AG04449 (cell line): ENCODE measurements at regions of chr11 and their contacts with region 1.

Region 1: GRCh38 chr11:124644426-124645280 is 22.0 kb downstream of the TBRG1 start:
- DNase-seq: peak; percentile 28
- H3K4me3 ChIP-seq: peak overlapping the region; percentile 36
- CTCF ChIP-seq: peak; percentile 68

Region 2: GRCh38 chr11:124633355-124633754 is 11.3 kb before region 1 on chr11:
- CTCF ChIA-PET with region 1: interaction called, 39 read pairs
- POLR2A ChIA-PET with region 1: no interaction called
- DNase-seq: no peak
- H3K4me3 ChIP-seq: no peak overlapping the region
- CTCF ChIP-seq: peak; percentile 8

Region 3: GRCh38 chr11:124673333-124674167 is 28.9 kb after region 1 on chr11 and contains the starts of genes SIAE and SPA17:
- CTCF ChIA-PET with region 1: interaction called, 28 read pairs
- POLR2A ChIA-PET with region 1: interaction called, 3 read pairs
- DNase-seq: peak; percentile 67
- H3K4me3 ChIP-seq: peak within 1 kb of the TSS; percentile 79
- CTCF ChIP-seq: no peak

Region 4: DNA sequence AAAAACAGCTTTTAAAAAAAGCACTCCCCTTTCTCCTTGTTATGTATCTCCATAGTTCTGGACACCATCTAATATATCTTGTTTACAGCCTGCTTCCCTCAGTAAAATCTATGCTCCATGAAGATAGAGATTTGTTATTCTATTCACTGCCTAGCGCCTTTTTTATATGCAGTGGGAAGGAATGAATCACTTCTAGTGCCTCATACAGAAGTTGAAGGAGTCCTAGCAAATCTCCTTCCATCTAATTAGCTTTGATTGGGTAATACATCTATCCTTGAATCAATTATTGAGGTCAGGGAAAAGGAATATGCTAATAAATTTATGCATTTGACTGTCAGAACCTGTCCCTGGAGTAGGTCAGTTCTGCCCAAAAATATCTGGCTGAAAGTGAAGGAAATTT is 54.9 kb after region 1 on chr11:
- CTCF ChIA-PET with region 1: no interaction called
- POLR2A ChIA-PET with region 1: no interaction called
- DNase-seq: no peak
- H3K4me3 ChIP-seq: no peak overlapping the region
- CTCF ChIP-seq: no peak

Region 5: GRCh38 chr11:124778281-124778680 is 133.6 kb after region 1 on chr11:
- CTCF ChIA-PET with region 1: interaction called, 12 read pairs
- POLR2A ChIA-PET with region 1: no interaction called
- DNase-seq: no peak
- H3K4me3 ChIP-seq: no peak overlapping the region
- CTCF ChIP-seq: no peak

Region 6: DNA sequence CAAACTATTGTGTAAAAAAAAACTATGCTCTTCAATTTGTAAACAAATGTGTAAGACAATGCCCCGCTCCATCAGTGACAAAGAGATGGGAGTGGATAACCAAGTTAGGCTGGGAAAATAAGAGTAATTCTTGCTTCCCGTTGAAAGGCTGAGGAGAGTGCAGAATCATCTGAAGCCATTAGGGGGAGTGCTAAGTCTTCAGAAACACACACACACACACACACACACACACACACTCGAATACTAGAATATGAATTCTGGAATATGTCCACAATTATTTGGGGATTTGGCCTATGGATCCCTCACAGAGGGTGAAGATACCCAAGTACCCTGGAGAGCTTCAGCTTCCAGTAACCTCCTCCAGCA is 192.8 kb after region 1 on chr11:
- CTCF ChIA-PET with region 1: interaction called, 102 read pairs
- POLR2A ChIA-PET with region 1: no interaction called
- DNase-seq: peak; percentile 56
- H3K4me3 ChIP-seq: no peak overlapping the region
- CTCF ChIP-seq: peak; percentile 67